G401 (cell line): ENCODE measurements at regions of chr19 and their contacts with region 1.

Region 1: GRCh38 chr19:13417054-13417453 is 89.2 kb downstream of the CACNA1A start:
- DNase-seq: peak; percentile 62

Region 2: GRCh38 chr19:13451434-13451995 is 34.5 kb after region 1 on chr19:
- in situ Hi-C with region 1: no loop called
- DNase-seq: no peak

Region 3: GRCh38 chr19:13492128-13492527 is 75.1 kb after region 1 on chr19:
- in situ Hi-C with region 1: loop called (anchors 5 kb)
- DNase-seq: peak; percentile 38